GM12878 (cell line): ENCODE measurements at regions of chr6 and their contacts with region 1.

Region 1: DNA sequence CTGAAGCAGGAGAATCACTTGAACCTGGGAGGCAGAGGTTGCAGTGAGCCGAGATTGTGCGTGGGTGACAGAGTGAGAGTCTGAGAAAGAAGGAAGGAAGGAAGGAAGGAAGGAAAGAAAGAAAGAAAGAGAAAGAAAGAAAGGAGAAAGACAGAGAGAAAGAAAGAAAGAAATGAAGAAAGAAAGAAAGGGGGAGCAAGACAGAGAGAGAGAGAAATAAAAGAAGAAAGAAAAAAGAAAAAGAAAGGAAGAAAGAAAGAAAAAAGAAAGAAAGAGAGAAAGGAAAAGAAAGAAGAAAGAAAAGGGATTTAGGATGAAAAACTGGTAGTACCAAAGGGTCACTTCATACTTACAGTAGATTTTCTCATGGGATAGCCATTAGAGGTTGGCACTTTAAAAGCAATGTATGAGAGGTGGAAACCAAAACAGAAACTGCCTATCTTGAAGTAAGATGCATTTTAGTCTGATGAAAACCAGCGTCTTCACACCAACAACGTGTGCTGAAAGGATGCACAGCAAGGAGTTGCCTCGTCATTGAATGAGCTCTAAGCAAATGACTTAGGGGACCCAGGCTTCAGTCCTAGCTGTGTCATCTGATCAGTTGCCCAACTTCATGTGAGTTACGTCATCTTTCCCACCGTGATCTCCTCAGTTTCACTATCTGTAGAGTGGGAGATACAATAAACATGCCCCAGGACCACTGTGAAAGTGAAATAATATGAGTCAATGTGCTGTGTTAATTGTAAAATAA is 133.9 kb upstream of the NEDD9 start:
- DNase-seq: peak; percentile 89
- ATAC-seq: peak; percentile 86
- H3K4me3 ChIP-seq: peak overlapping the region; percentile 15; the same call in 1 of the 2 replicates
- H3K27ac ChIP-seq: peak overlapping the region; percentile 78
- H3K4me1 ChIP-seq: peaks cover 64% of the 10 kb centered on the region
- H3K27me3 ChIP-seq: no peaks in the 10 kb centered on the region
- CTCF ChIP-seq: no peak
- EP300 ChIP-seq: 0 out of 4 replicates have a peak, but pooled peaks of 1 of the 2 experiments have one; percentile 12
- POLR2A ChIP-seq: peak; percentile 45; the same call in 1 of the 2 replicates
- RAD21 ChIP-seq: no peak

Region 2: DNA sequence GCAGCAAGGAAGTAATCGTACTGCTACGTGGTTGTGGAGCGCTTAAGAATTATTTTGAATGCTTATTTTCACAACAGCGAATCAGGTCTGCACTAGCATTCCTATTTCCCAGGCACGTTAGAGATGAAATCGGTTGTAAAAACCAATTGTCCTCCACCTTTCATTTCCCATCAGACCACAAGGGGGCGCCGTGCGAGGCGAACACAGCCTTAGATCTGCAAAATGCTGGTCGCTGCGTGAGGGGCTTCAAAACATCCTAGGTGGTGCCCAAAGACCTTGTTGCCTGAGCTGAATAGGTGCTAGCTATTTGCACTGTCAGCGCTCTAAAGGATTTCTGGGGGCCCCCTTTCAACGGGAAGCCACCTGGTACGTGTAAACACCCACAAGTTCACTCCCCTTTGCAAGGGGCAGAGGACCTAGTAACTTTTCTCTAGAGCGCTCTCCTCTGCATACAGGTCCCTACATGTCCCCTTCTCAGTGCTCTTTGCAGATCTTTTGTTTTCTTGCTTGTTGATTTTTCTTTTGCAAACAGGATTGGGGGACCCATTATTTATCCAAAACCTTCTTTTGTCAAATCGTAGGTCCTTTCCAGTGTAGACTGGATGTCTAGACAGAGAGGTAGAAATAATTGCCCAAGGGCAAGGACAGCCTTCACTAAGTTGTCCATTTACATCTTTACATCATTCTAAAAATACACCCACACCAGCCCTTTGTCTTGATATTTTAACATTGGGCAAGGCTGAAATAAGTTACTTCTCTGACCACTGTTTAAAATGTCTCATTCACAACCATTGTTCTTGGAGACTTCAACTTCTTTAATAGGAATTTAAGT is 193.6 kb before region 1 on chr6:
- CTCF ChIA-PET with region 1: interaction called, 5 read pairs
- POLR2A ChIA-PET with region 1: no interaction called
- RAD21 ChIA-PET with region 1: no interaction called
- SMC1A ChIA-PET with region 1: interaction called, 5 read pairs
- in situ Hi-C with region 1: no loop called
- intact Hi-C with region 1: loop called (anchors 5 kb)
- DNase-seq: no peak
- ATAC-seq: peak; percentile 89
- H3K4me3 ChIP-seq: no peak overlapping the region
- H3K27ac ChIP-seq: no peak overlapping the region
- H3K4me1 ChIP-seq: no peaks in the 10 kb centered on the region
- H3K27me3 ChIP-seq: no peaks in the 10 kb centered on the region
- CTCF ChIP-seq: peak; percentile 81 to 88 (median 81)
- EP300 ChIP-seq: no peak
- POLR2A ChIP-seq: no peak
- RAD21 ChIP-seq: peak; percentile 83

Region 3: GRCh38 chr6:11324453-11325015 is 41.8 kb before region 1 on chr6:
- CTCF ChIA-PET with region 1: interaction called, 3 read pairs
- POLR2A ChIA-PET with region 1: interaction called, 7 read pairs
- RAD21 ChIA-PET with region 1: interaction called, 33 read pairs
- SMC1A ChIA-PET with region 1: interaction called, 129 read pairs
- in situ Hi-C with region 1: no loop called
- intact Hi-C with region 1: no loop called
- DNase-seq: peak; percentile 61
- ATAC-seq: peak; percentile 71
- H3K4me3 ChIP-seq: no peak overlapping the region
- H3K27ac ChIP-seq: peak overlapping the region; percentile 45
- H3K4me1 ChIP-seq: peaks cover 41% of the 10 kb centered on the region
- H3K27me3 ChIP-seq: no peaks in the 10 kb centered on the region
- CTCF ChIP-seq: no peak
- EP300 ChIP-seq: peak; percentile 57 to 76; a peak in 2 of 4 replicates
- POLR2A ChIP-seq: no peak
- RAD21 ChIP-seq: 0 out of 2 replicates have a peak, but pooled peaks have one; percentile 13

Region 4: GRCh38 chr6:11346516-11346915 is 19.8 kb before region 1 on chr6:
- CTCF ChIA-PET with region 1: interaction called, 25 read pairs
- POLR2A ChIA-PET with region 1: interaction called, 12 read pairs
- RAD21 ChIA-PET with region 1: interaction called, 114 read pairs
- SMC1A ChIA-PET with region 1: interaction called, 59 read pairs
- in situ Hi-C with region 1: no loop called
- intact Hi-C with region 1: no loop called
- DNase-seq: peak; percentile 71
- ATAC-seq: peak; percentile 87
- H3K4me3 ChIP-seq: no peak overlapping the region
- H3K27ac ChIP-seq: peak overlapping the region; percentile 65
- H3K4me1 ChIP-seq: peaks cover 39% of the 10 kb centered on the region
- H3K27me3 ChIP-seq: no peaks in the 10 kb centered on the region
- CTCF ChIP-seq: no peak
- EP300 ChIP-seq: peak in 1 of 2 experiments; percentile 22; a peak in 1 of 4 replicates
- POLR2A ChIP-seq: no peak
- RAD21 ChIP-seq: no peak

Region 5: GRCh38 chr6:11404838-11405237 is 38.5 kb after region 1 on chr6:
- CTCF ChIA-PET with region 1: no interaction called
- POLR2A ChIA-PET with region 1: no interaction called
- RAD21 ChIA-PET with region 1: no interaction called
- SMC1A ChIA-PET with region 1: interaction called, 11 read pairs
- in situ Hi-C with region 1: no loop called
- intact Hi-C with region 1: no loop called
- DNase-seq: no peak
- ATAC-seq: peak; percentile 17; the same call in 2 of the 3 replicates
- H3K4me3 ChIP-seq: no peak overlapping the region
- H3K27ac ChIP-seq: no peak overlapping the region
- H3K4me1 ChIP-seq: peaks cover 11% of the 10 kb centered on the region
- H3K27me3 ChIP-seq: no peaks in the 10 kb centered on the region
- CTCF ChIP-seq: no peak
- EP300 ChIP-seq: no peak
- POLR2A ChIP-seq: no peak
- RAD21 ChIP-seq: no peak

Region 6: GRCh38 chr6:11514672-11515071 is 148.3 kb after region 1 on chr6:
- CTCF ChIA-PET with region 1: no interaction called
- POLR2A ChIA-PET with region 1: no interaction called
- RAD21 ChIA-PET with region 1: interaction called, 5 read pairs
- SMC1A ChIA-PET with region 1: interaction called, 11 read pairs
- in situ Hi-C with region 1: no loop called
- intact Hi-C with region 1: no loop called
- DNase-seq: peak; percentile 87
- ATAC-seq: peak; percentile 87
- H3K4me3 ChIP-seq: no peak overlapping the region
- H3K27ac ChIP-seq: peak overlapping the region; percentile 97
- H3K4me1 ChIP-seq: peaks cover 40% of the 10 kb centered on the region
- H3K27me3 ChIP-seq: no peaks in the 10 kb centered on the region
- CTCF ChIP-seq: no peak
- EP300 ChIP-seq: peak in 1 of 2 experiments; percentile 89; a peak in 1 of 4 replicates
- POLR2A ChIP-seq: no peak
- RAD21 ChIP-seq: no peak